Endothelial cell of umbilical vein (primary cell): ENCODE measurements at regions of chr4 and their contacts with region 1.

Region 1: GRCh38 chr4:140049024-140049848 is 104.7 kb downstream of the MAML3 start:
- DNase-seq: peak; percentile 85
- H3K4me3 ChIP-seq: peak overlapping the region; percentile 0 to 24 (median 5)
- H3K27ac ChIP-seq: peak overlapping the region; percentile 80
- H3K4me1 ChIP-seq: peaks cover 49% of the 10 kb centered on the region
- H3K27me3 ChIP-seq: no peaks in the 10 kb centered on the region
- CTCF ChIP-seq: no peak
- POLR2A ChIP-seq: no peak

Region 2: GRCh38 chr4:139720540-139721205 is 328.6 kb before region 1 on chr4:
- CTCF ChIA-PET with region 1: no interaction called
- POLR2A ChIA-PET with region 1: no interaction called
- dilution Hi-C with region 1: no loop called
- intact Hi-C with region 1: no loop called
- DNase-seq: no peak
- H3K4me3 ChIP-seq: no peak overlapping the region
- H3K27ac ChIP-seq: no peak overlapping the region
- H3K4me1 ChIP-seq: no peaks in the 10 kb centered on the region
- H3K27me3 ChIP-seq: no peaks in the 10 kb centered on the region
- CTCF ChIP-seq: no peak
- POLR2A ChIP-seq: no peak

Region 3: GRCh38 chr4:139734875-139735380 is 314.3 kb before region 1 on chr4:
- CTCF ChIA-PET with region 1: interaction called, 12 read pairs
- POLR2A ChIA-PET with region 1: no interaction called
- dilution Hi-C with region 1: no loop called
- intact Hi-C with region 1: loop called (anchors 1 kb)
- DNase-seq: peak; percentile 94
- H3K4me3 ChIP-seq: peak overlapping the region in 2 of 3 experiments; percentile 18 to 34
- H3K27ac ChIP-seq: peak overlapping the region; percentile 14
- H3K4me1 ChIP-seq: peaks cover 12% of the 10 kb centered on the region
- H3K27me3 ChIP-seq: no peaks in the 10 kb centered on the region
- CTCF ChIP-seq: peak; percentile 66 to 88
- POLR2A ChIP-seq: no peak

Region 4: DNA sequence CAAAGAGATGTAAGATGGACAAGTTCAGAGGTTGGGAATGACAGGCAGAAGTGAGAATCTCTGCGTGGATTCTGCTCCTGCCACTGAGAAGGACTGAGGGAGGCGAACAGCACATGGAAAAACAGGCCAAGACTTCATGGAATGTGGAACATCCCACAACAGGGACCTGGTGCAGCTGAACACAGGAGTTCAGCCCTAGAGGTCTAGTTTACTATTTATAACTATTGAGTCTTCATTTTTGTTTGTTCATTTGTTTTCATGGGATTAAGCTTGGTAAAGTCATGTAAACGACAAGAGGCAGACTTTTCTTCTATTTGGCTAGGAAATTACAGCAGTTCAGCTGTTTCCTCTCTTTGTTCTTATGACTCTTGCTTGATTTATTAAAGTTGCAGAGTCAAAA is 129.7 kb before region 1 on chr4:
- CTCF ChIA-PET with region 1: interaction called, 3 read pairs
- POLR2A ChIA-PET with region 1: no interaction called
- dilution Hi-C with region 1: no loop called
- intact Hi-C with region 1: loop called (anchors 5 kb)
- DNase-seq: peak; percentile 95
- H3K4me3 ChIP-seq: no peak overlapping the region
- H3K27ac ChIP-seq: peak overlapping the region; percentile 84
- H3K4me1 ChIP-seq: peaks cover 47% of the 10 kb centered on the region
- H3K27me3 ChIP-seq: no peaks in the 10 kb centered on the region
- CTCF ChIP-seq: no peak
- POLR2A ChIP-seq: peak; percentile 21

Region 5: GRCh38 chr4:140037357-140038030 is 11.7 kb before region 1 on chr4:
- CTCF ChIA-PET with region 1: interaction called, 17 read pairs
- POLR2A ChIA-PET with region 1: interaction called, 8 read pairs
- dilution Hi-C with region 1: no loop called
- intact Hi-C with region 1: loop called (anchors 1 kb)
- DNase-seq: peak; percentile 93
- H3K4me3 ChIP-seq: peak overlapping the region in 1 of 3 experiments; percentile 45
- H3K27ac ChIP-seq: peak overlapping the region; percentile 99
- H3K4me1 ChIP-seq: peaks cover 29% of the 10 kb centered on the region
- H3K27me3 ChIP-seq: no peaks in the 10 kb centered on the region
- CTCF ChIP-seq: no peak
- POLR2A ChIP-seq: peak; percentile 41

Region 6: GRCh38 chr4:140095694-140096482 is 46.7 kb after region 1 on chr4:
- CTCF ChIA-PET with region 1: interaction called, 31 read pairs
- POLR2A ChIA-PET with region 1: no interaction called
- dilution Hi-C with region 1: no loop called
- intact Hi-C with region 1: loop called (anchors 1 kb)
- DNase-seq: peak; percentile 95
- H3K4me3 ChIP-seq: peak overlapping the region in 1 of 3 experiments; percentile 57
- H3K27ac ChIP-seq: peak overlapping the region; percentile 100
- H3K4me1 ChIP-seq: peaks cover 97% of the 10 kb centered on the region
- H3K27me3 ChIP-seq: no peaks in the 10 kb centered on the region
- CTCF ChIP-seq: no peak
- POLR2A ChIP-seq: peak; percentile 53